GM12878 (cell line): ENCODE measurements at regions of chr1 and their contacts with region 1.

Region 1: DNA sequence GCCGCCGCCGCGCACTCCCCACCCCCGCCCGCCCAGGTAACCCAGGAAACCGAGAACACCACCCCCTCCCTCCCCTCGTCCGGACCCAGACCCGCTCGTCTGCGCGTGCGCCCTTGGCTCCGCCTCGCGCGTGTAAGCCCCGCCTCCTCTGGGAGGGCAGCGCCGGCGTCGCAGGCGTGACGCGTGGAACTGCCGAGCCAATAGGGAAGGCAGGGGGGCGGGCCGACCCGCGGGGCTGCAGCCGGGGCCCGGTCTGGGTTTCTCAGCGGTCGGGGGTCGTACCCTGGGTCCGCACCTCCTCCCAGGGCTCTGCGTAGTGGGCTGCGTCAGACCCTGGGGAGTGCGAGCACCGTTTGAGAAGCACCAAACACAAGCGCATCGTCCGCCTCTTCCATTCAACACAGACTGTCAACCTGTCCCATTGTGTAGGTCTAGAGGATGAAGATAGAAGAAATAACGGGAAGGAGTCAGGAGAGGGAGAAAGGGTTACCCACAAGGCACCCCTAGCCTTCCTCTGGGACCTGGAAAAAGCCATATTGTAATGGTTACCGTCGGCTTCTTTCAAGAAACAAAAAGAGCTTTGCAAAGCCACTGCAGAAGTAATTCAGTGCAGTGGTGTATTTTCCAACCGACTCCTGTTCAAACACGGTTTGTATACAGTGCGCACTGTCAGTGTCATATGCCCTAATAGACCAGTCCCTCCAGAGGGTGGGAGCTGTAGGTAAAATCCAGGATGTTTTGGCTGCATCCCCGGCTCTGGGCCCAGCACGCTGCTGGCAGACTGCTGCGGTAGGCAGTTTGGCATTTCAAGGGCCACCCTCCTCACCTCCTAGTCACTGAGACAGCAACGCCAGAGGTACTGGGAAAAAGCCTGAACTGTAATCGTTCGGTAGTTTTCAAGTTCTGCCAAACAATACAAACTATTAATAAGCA is 473 bp upstream of the LYST start:
- DNase-seq: peak; percentile 87
- ATAC-seq: peak; percentile 78
- H3K4me3 ChIP-seq: peak overlapping the region; percentile 91
- H3K27ac ChIP-seq: peak overlapping the region; percentile 88
- H3K4me1 ChIP-seq: peaks cover 5% of the 10 kb centered on the region; the same call in 1 of the 2 replicates
- H3K27me3 ChIP-seq: no peaks in the 10 kb centered on the region
- CTCF ChIP-seq: no peak
- EP300 ChIP-seq: no peak
- POLR2A ChIP-seq: peak; percentile 88
- RAD21 ChIP-seq: no peak

Region 2: DNA sequence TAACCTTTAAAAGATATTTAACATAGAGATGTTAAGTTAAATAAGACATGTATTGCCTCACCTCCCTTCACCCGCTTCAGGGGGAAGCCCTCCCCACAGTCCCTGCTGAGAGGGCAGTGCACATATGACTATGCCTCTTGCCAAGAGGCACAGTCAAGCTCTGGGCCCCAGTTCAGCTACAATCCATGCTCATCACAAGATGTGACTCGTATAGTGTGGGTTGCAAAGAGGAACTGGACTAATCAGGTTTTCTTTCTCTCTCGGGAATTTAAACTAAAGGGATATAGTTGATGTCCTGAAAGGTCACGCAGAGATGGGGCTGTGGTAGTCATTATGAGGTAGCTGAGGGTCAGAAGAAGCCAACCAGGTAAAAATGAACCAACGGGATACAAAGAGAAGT is 36.0 kb before region 1 on chr1:
- CTCF ChIA-PET with region 1: no interaction called
- POLR2A ChIA-PET with region 1: interaction called, 4 read pairs
- RAD21 ChIA-PET with region 1: interaction called, 4 read pairs
- SMC1A ChIA-PET with region 1: interaction called, 13 read pairs
- in situ Hi-C with region 1: no loop called
- intact Hi-C with region 1: no loop called
- DNase-seq: peak; percentile 35
- ATAC-seq: peak; percentile 99
- H3K4me3 ChIP-seq: no peak overlapping the region
- H3K27ac ChIP-seq: no peak overlapping the region
- H3K4me1 ChIP-seq: no peaks in the 10 kb centered on the region
- H3K27me3 ChIP-seq: no peaks in the 10 kb centered on the region
- CTCF ChIP-seq: no peak
- EP300 ChIP-seq: peak in 1 of 2 experiments; percentile 34; a peak in 1 of 4 replicates
- POLR2A ChIP-seq: no peak
- RAD21 ChIP-seq: no peak

Region 3: DNA sequence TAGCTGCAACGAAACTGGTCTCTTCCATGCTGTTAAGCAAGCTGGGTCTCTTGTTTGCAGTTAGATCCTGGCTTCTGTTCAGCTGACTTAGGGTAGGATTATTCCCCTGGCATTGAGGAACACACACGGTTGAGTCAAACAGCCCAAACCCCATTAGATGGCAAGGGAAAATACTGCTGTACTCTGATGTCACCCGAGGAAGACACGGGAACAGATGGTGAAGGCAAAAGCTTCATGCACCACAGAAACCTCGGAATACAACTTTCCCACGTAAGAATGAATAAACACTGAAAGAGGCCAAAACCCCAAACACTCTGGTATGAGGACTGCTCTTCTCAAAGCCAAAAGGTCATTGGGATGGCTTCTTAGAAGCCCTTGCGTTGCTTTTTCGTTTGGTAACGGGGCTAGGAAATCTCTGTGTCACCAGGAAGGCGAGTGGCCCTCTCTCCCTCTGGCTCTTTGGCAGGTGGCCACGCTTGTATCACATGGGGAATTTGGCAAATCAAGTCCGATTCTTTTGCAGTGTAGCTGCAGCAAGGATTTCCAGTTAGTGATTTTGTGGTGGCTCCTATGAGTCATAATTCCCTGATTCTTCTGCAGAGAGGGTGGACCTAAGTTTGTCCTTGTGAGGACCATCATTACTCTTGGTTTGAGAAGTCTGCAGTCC is 16.2 kb after region 1 on chr1:
- CTCF ChIA-PET with region 1: interaction called, 12 read pairs
- POLR2A ChIA-PET with region 1: interaction called, 64 read pairs
- RAD21 ChIA-PET with region 1: interaction called, 52 read pairs
- SMC1A ChIA-PET with region 1: interaction called, 84 read pairs
- in situ Hi-C with region 1: no loop called
- intact Hi-C with region 1: loop called (anchors 2 kb)
- DNase-seq: peak; percentile 76
- ATAC-seq: peak; percentile 50
- H3K4me3 ChIP-seq: peak overlapping the region; percentile 33
- H3K27ac ChIP-seq: peak overlapping the region; percentile 71
- H3K4me1 ChIP-seq: peaks cover 36% of the 10 kb centered on the region
- H3K27me3 ChIP-seq: no peaks in the 10 kb centered on the region
- CTCF ChIP-seq: no peak
- EP300 ChIP-seq: no peak
- POLR2A ChIP-seq: no peak
- RAD21 ChIP-seq: no peak

Region 4: GRCh38 chr1:235933017-235933765 is 66.0 kb after region 1 on chr1:
- CTCF ChIA-PET with region 1: interaction called, 8 read pairs
- POLR2A ChIA-PET with region 1: interaction called, 4 read pairs
- RAD21 ChIA-PET with region 1: interaction called, 14 read pairs
- SMC1A ChIA-PET with region 1: interaction called, 10 read pairs
- in situ Hi-C with region 1: no loop called
- intact Hi-C with region 1: no loop called
- DNase-seq: no peak
- ATAC-seq: peak; percentile 60
- H3K4me3 ChIP-seq: no peak overlapping the region
- H3K27ac ChIP-seq: no peak overlapping the region
- H3K4me1 ChIP-seq: peaks cover 23% of the 10 kb centered on the region
- H3K27me3 ChIP-seq: no peaks in the 10 kb centered on the region
- CTCF ChIP-seq: peak in 2 of 3 experiments; percentile 6; a peak in 1 of 6 replicates
- EP300 ChIP-seq: no peak
- POLR2A ChIP-seq: no peak
- RAD21 ChIP-seq: no peak

Region 5: DNA sequence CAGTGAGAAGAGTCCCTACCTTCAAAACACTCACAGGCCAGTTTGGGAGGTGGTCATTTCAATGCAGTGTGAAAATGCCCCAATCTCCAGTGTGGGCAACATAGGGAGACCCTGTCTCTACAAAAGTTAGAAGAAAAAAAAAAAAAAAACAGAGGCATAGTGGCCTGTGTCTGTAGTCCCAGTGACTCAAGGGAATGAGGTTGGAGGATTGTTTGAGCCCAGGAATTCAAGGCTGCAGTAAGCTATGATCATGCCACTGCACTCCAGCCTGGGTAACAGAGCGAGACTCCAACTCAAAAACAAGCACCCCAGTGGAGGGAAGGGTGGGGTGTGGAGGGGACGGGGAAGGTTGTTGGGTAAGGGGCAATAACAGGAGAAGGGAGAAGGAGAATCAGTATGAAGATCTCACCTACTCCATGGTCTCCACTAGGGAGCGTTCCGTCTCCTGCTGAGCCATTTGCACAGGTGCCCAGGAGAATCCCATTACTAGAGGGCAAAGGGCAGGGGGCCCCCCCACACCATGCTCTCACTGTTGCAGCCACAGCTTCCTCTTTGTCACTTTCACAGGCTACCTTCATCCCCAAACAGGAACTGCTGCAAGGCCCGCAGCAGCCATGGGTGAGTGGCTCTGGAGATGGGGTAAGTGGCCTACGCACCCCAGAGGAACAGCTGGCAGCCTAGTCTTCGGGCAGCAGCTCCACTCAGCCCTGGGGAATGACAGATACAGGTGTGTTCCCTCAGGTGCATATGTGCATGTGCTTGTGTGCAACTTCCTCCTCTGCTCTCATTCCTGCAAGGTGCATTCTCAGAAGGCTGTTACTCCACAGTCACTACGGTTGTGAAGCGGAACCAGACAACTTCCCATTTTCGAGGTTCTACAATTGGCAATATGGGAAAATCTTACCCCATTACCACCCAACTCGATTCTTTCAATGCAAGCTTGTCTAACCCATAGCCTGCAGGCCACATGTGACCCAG is 87.4 kb after region 1 on chr1:
- CTCF ChIA-PET with region 1: interaction called, 10 read pairs
- POLR2A ChIA-PET with region 1: interaction called, 9 read pairs
- RAD21 ChIA-PET with region 1: interaction called, 9 read pairs
- SMC1A ChIA-PET with region 1: interaction called, 14 read pairs
- in situ Hi-C with region 1: no loop called
- intact Hi-C with region 1: loop called (anchors 2 kb)
- DNase-seq: peak; percentile 87
- ATAC-seq: peak; percentile 94
- H3K4me3 ChIP-seq: no peak overlapping the region
- H3K27ac ChIP-seq: peak overlapping the region; percentile 73
- H3K4me1 ChIP-seq: peaks cover 37% of the 10 kb centered on the region
- H3K27me3 ChIP-seq: no peaks in the 10 kb centered on the region
- CTCF ChIP-seq: peak; percentile 27 to 35 (median 33); a peak in 4 of 6 replicates
- EP300 ChIP-seq: peak; percentile 80 to 93
- POLR2A ChIP-seq: no peak
- RAD21 ChIP-seq: peak; percentile 16

Region 6: DNA sequence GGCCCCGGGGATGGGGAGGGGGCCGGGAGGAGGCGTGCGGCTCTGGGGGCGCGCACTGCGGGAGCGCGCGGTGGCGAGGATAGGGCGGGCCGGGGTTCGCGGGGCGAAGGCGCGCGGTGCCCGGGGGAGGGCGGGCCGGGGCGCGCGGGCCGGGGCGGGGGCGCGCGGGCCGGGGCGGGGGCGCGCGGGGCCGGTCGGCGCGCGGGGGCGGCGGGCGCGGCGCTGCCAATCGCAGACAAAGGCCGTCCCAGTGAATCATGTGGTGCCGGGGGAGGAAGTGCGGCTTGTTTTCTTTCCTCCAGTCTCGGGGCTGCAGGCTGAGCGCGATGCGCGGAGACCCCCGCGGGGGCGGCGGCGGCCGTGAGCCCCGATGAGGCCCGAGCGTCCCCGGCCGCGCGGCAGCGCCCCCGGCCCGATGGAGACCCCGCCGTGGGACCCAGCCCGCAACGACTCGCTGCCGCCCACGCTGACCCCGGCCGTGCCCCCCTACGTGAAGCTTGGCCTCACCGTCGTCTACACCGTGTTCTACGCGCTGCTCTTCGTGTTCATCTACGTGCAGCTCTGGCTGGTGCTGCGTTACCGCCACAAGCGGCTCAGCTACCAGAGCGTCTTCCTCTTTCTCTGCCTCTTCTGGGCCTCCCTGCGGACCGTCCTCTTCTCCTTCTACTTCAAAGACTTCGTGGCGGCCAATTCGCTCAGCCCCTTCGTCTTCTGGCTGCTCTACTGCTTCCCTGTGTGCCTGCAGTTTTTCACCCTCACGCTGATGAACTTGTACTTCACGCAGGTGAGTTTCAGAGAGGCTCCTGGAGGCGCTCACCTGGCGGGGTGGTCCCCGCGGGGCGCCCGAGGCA is 275.3 kb after region 1 on chr1 and contains the start of gene GPR137B:
- CTCF ChIA-PET with region 1: no interaction called
- POLR2A ChIA-PET with region 1: no interaction called
- RAD21 ChIA-PET with region 1: no interaction called
- SMC1A ChIA-PET with region 1: no interaction called
- in situ Hi-C with region 1: no loop called
- intact Hi-C with region 1: loop called (anchors 10 kb)
- DNase-seq: no peak
- ATAC-seq: peak; percentile 61
- H3K4me3 ChIP-seq: peak within 1 kb of the TSS; percentile 84
- H3K27ac ChIP-seq: peak within 1 kb of the TSS; percentile 62
- H3K4me1 ChIP-seq: peaks cover 17% of the 10 kb centered on the region
- H3K27me3 ChIP-seq: peaks cover 1 to 13% of the 10 kb centered on the region in 2 experiments
- CTCF ChIP-seq: no peak
- EP300 ChIP-seq: no peak
- POLR2A ChIP-seq: peak; percentile 63
- RAD21 ChIP-seq: no peak
- polyA plus RNA-seq, gene GPR137B: 5.4 to 6.4 TPM